ENCODE measurements at regions of chr11 and their contacts with region 1.

Region 1: GRCh38 chr11:75384438-75385080 is 14.8 kb upstream of the RPS3 start:
- DNase-seq: peak; percentile 69 to 77
- H3K4me3 ChIP-seq: no peak overlapping the region
- H3K27ac ChIP-seq: no peak overlapping the region
- H3K4me1 ChIP-seq: peaks cover 0 to 4% of the 10 kb centered on the region in 2 donors
- H3K27me3 ChIP-seq: no peaks in the 10 kb centered on the region
- CTCF ChIP-seq: peak; percentile 80 to 99 (median 93)
- POLR2A ChIP-seq: no peak

Region 2: GRCh38 chr11:75280227-75280701 is 104.3 kb before region 1 on chr11:
- intact Hi-C with region 1: loop called (anchors 2 kb)
- DNase-seq: peak; percentile 64 to 70
- H3K4me3 ChIP-seq: no peak overlapping the region
- H3K27ac ChIP-seq: peak overlapping the region in 2 of 3 donors; percentile 11 to 31
- H3K4me1 ChIP-seq: peaks cover 0 to 4% of the 10 kb centered on the region in 2 donors
- H3K27me3 ChIP-seq: no peaks in the 10 kb centered on the region
- CTCF ChIP-seq: peak; percentile 89 to 94 (median 93)
- POLR2A ChIP-seq: no peak

Region 3: DNA sequence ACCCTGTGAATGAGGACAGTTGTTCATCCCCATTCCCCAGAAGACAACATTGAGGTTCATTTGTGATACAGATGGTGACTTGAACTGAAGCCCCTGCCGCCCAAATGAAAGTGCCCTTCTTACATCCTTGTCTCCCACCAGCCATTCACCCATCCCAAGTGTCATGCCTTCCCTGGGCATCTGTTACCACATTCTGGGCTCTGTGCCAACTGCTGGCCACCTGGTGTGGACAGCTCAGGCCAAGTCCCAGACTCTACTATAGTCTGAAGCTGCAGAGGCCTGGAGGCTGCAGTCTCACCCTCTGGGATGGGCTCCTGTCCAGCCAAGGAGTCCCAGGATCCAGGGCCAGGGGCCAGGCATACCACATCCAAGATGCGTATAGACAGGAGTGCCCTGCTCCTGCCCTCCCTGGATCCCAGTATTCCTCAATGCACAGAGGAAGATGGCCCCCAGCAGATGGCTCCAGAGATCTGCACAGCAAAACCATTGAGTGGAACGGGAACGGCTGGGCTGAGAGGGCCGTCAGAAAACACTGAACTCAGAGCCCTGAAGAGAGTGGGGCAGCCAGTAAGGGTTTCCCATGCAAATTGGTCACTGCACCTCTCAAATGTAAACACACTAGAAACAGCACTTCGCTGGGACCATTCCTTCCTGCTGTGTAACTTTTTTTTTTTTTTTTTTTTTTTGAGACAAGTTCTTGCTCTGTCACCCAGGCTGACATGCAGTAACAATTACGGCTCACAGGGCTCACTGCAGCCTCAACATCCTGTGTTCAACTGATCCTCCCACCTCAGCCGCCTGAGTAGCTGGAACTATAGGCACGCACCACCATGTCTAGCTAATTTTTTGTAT is 55.9 kb before region 1 on chr11:
- intact Hi-C with region 1: loop called (anchors 5 kb)
- DNase-seq: peak; percentile 67 to 70
- H3K4me3 ChIP-seq: no peak overlapping the region
- H3K27ac ChIP-seq: peak overlapping the region in 2 of 3 donors; percentile 4 to 24
- H3K4me1 ChIP-seq: peaks cover 7 to 24% of the 10 kb centered on the region in 2 donors
- H3K27me3 ChIP-seq: no peaks in the 10 kb centered on the region
- CTCF ChIP-seq: peak in 4 of 6 experiments; percentile 47 to 69 (median 60)
- POLR2A ChIP-seq: no peak

Region 4: DNA sequence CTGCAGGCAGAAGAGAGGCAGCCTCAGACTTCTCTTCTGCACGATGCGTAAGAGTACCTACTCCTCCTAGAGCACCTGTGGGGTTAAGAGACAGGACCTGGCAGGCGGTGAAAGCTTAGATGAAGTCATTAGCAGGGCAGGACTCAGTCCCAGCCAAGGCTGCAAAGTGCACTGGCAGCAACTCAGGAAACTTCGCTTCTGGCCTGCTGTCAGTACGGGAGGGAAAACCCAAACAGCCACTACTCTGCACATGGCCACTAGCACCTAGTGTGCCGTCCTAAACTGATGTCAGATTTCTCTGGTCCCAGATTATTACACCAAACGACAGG is 57.2 kb after region 1 on chr11:
- intact Hi-C with region 1: no loop called
- DNase-seq: no peak
- H3K4me3 ChIP-seq: no peak overlapping the region
- H3K27ac ChIP-seq: no peak overlapping the region
- H3K4me1 ChIP-seq: no peaks in the 10 kb centered on the region
- H3K27me3 ChIP-seq: no peaks in the 10 kb centered on the region
- CTCF ChIP-seq: no peak
- POLR2A ChIP-seq: no peak

Region 5: DNA sequence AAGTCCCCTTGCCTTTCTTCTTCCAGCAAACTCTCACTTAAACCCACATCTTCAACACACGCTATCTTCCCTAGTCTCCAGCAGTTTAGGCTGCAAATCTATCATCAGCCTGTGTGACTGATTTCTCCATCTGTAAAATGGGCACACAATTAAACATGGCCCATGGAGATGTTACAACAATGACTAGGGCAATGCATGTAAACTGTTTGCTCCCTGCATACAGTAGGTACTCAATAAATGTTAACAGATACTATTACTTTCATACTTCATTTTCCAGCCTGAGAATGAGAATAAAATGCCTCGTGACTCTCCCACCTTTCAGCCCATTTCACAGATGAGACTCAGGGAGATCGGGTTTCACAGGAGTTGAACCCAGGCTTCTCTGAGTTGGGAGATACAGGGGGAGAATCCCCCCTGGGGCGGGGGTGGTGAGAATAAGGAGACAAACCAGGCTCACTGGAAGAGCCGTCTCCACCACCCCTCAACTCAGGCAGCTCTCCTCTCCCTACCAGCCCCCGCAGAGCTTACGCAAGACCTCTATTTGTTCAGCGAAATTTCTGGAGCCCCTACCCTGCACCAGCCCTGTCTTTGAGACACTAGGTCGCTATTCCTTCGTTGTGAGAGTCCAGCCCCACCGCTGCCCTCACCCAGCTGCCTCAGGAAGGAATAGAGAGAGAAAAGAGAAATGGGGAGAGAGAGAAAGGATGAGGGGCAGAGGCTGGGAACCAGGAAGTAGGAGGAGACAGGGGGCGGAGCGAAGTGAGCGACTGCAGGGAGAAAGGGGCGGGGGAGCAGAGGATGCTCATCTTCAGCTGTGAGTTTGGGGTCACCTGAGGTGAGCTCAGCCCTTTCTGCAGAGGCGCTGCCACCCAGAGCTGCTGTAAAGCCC is 90.6 kb after region 1 on chr11:
- intact Hi-C with region 1: no loop called
- DNase-seq: peak; percentile 32 to 35
- H3K4me3 ChIP-seq: no peak overlapping the region
- H3K27ac ChIP-seq: peak overlapping the region; percentile 20 to 60 (median 55)
- H3K4me1 ChIP-seq: peaks cover 24 to 36% of the 10 kb centered on the region in 2 donors
- H3K27me3 ChIP-seq: no peaks in the 10 kb centered on the region
- CTCF ChIP-seq: no peak
- POLR2A ChIP-seq: no peak

Measured in thyroid gland (tissue), 4 donors.